Dendritic cell treated with granulocyte-macrophage colony-stimulating factor and Interleukin-4, amounts not matched to agents 40 ng/mL and 50 ng/mL, for 4 days (primary cell): ENCODE measurements at regions of chr6 and their contacts with region 1.

Region 1: GRCh38 chr6:157314705-157315321 is 8.5 kb downstream of the TMEM242 start:
- H3K4me3 Mint-ChIP-seq: no peak overlapping the region
- H3K27ac Mint-ChIP-seq: no peak overlapping the region
- H3K4me1 Mint-ChIP-seq: peaks cover 12% of the 10 kb centered on the region
- H3K27me3 Mint-ChIP-seq: no peaks in the 10 kb centered on the region

Region 2: GRCh38 chr6:157335829-157336228 is 21.0 kb after region 1 on chr6:
- intact Hi-C with region 1: loop called (anchors 2 kb)
- H3K4me3 Mint-ChIP-seq: no peak overlapping the region
- H3K27ac Mint-ChIP-seq: no peak overlapping the region
- H3K4me1 Mint-ChIP-seq: peaks cover 5% of the 10 kb centered on the region
- H3K27me3 Mint-ChIP-seq: peaks cover 11% of the 10 kb centered on the region

Region 3: DNA sequence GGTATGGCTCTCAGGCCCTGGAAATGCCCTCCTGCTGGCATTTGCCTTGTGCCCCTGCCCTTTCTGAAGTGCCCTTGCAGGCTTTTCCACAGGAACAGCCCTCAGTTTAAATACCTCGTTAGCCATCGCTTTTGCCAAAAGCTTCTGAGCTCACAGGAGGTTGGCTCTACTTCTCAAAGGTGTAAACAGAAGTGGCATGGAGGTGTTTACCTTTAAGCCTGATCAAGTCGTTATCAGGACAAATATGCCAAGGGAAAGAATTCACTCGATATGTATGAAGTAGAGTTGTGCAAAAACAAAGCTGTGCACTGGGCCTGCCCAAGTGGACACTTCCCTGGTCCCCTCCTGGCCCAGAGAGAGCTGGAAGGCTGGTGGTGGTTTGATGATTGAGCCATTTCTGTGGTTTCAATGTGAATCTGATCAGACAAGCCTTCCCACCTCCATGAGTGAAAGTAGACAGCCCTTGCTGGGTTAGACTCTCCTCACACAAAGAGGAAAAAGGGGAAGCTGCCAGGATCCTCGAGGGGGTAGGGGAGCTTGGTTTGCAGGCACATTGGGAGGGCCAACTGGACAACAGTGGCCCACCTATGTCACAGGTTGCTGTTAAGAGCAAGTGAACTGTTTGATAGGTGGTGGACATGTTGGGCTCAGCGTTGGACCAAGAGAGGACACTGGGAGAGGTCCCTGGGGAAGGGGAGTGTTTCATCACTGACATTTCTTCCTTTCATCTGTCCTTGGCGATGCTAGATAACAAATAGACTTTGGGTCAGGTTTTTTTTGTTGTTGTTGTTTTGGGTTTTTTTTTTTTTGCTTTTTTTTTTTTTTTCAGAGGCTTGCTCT is 164.9 kb after region 1 on chr6:
- intact Hi-C with region 1: no loop called
- H3K4me3 Mint-ChIP-seq: no peak overlapping the region
- H3K27ac Mint-ChIP-seq: no peak overlapping the region
- H3K4me1 Mint-ChIP-seq: peaks cover 5% of the 10 kb centered on the region
- H3K27me3 Mint-ChIP-seq: no peaks in the 10 kb centered on the region

Region 4: GRCh38 chr6:157597446-157598312 is 282.9 kb after region 1 on chr6:
- intact Hi-C with region 1: loop called (anchors 1 kb)
- H3K4me3 Mint-ChIP-seq: no peak overlapping the region
- H3K27ac Mint-ChIP-seq: no peak overlapping the region
- H3K4me1 Mint-ChIP-seq: peaks cover 5% of the 10 kb centered on the region
- H3K27me3 Mint-ChIP-seq: no peaks in the 10 kb centered on the region